ENCODE measurements at regions of chr12 and their contacts with region 1.

Region 1: DNA sequence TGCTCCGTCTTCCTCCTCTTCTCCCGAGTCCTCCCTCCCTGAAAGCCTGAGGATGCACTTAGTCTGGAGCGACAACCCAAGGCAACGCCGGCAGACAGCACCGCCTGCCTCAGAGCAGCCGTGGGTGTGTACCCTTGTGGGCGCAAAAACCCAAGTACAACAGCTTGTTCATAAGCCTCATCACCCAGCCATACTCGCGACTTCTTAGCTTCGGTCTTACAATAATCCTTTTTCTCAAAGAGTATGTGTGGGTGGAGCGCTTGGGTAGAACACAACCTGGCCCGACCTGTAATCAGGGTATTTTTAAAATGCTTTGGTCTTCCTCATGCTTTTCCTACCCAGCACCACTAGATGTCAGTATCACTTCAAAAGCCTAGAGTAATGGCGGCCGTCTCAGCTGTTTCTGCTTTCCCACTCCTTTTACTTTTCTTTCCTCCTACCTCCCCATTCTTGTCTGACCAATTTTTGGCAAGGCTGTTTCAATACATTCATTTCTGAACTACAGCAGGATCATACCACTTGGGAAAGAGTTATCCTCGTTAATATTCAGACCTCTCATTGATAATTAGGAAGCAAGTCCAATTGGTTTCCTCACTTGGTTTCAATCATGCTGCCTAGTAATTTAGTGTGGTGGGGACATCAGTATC is 198.9 kb downstream of the EPS8 start:
- DNase-seq: peak; percentile 72
- ATAC-seq: peak; percentile 97
- H3K4me3 Mint-ChIP-seq: peak overlapping the region; percentile 65
- H3K27ac Mint-ChIP-seq: peak overlapping the region; percentile 62
- H3K4me1 Mint-ChIP-seq: peaks cover 14% of the 10 kb centered on the region
- H3K27me3 Mint-ChIP-seq: peaks cover under 1% of the 10 kb centered on the region

Region 2: GRCh38 chr12:15789220-15790171 is 199.2 kb after region 1 on chr12 and contains the start of gene EPS8:
- CTCF ChIA-PET with region 1: interaction called, 15 read pairs
- POLR2A ChIA-PET with region 1: no interaction called
- DNase-seq: peak; percentile 89
- ATAC-seq: peak; percentile 98
- H3K4me3 Mint-ChIP-seq: peak within 1 kb of the TSS; percentile 85
- H3K27ac Mint-ChIP-seq: peak within 1 kb of the TSS; percentile 79
- H3K4me1 Mint-ChIP-seq: peaks cover 17% of the 10 kb centered on the region
- H3K27me3 Mint-ChIP-seq: peaks cover 55% of the 10 kb centered on the region
- total RNA-seq, gene EPS8: 1.0 to 2.2 TPM

Region 3: DNA sequence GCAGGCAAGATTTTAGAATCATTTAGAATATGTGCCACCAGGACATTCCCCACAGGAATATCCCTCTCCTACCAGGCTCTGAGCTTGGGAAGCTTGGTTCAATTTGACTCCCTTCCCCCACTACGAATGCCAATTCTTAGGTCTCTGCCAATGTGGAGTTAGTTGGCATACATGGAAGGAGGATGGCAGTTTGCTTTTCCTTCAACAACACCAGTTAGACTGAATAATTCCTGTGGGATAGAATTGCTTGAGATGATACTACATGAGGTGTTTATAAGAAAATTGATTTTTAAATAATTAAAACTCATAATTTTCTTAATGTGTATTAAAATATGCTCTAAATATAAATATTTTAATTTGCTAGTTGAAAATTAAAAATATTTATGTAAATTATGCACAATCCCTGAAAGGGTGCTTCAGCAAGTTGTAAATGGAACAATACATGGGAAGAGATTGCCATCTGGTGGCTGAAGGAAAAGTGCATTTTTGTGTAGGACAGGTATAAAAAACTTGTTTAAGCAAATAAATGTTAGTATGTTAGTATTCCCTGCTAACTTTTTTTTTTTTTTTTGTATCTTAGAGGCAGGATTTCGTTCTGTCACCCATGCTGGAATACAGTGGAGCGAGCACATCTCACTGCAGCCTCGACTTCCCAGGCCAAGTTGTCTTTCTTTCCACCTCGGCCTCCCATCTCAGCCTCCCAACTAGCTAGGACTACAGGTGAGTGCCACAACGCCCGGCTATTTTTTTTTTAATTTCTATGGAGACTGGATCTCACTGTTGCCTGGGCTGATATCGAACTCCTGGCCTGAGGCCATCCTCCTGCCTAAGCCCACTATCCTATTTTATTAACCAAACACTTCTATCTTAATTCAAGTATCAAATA is 266.0 kb after region 1 on chr12:
- CTCF ChIA-PET with region 1: interaction called, 32 read pairs
- POLR2A ChIA-PET with region 1: interaction called, 8 read pairs
- DNase-seq: peak; percentile 69
- ATAC-seq: peak; percentile 65
- H3K4me3 Mint-ChIP-seq: no peak overlapping the region
- H3K27ac Mint-ChIP-seq: no peak overlapping the region
- H3K4me1 Mint-ChIP-seq: no peaks in the 10 kb centered on the region
- H3K27me3 Mint-ChIP-seq: peaks cover 16% of the 10 kb centered on the region

Region 4: GRCh38 chr12:15899282-15899870 is 309.1 kb after region 1 on chr12:
- CTCF ChIA-PET with region 1: interaction called, 22 read pairs
- POLR2A ChIA-PET with region 1: interaction called, 3 read pairs
- DNase-seq: no peak
- ATAC-seq: peak; percentile 57
- H3K4me3 Mint-ChIP-seq: no peak overlapping the region
- H3K27ac Mint-ChIP-seq: no peak overlapping the region
- H3K4me1 Mint-ChIP-seq: peaks cover 12% of the 10 kb centered on the region
- H3K27me3 Mint-ChIP-seq: no peaks in the 10 kb centered on the region

Region 5: GRCh38 chr12:15910864-15911721 is 320.8 kb after region 1 on chr12 and contains the start of gene DERA:
- CTCF ChIA-PET with region 1: interaction called, 14 read pairs
- POLR2A ChIA-PET with region 1: no interaction called
- DNase-seq: peak; percentile 57
- ATAC-seq: peak; percentile 95
- H3K4me3 Mint-ChIP-seq: peak within 1 kb of the TSS; percentile 92
- H3K27ac Mint-ChIP-seq: peak within 1 kb of the TSS; percentile 91
- H3K4me1 Mint-ChIP-seq: peaks cover 23% of the 10 kb centered on the region
- H3K27me3 Mint-ChIP-seq: no peaks in the 10 kb centered on the region
- total RNA-seq, gene DERA: 23.1 to 27.7 TPM

Measured in activated CD8-positive, alpha-beta T cell treated with anti-CD3 and anti-CD28 coated beads, Interleukin-2, amount 10 ng/mL, durations not matched to agents 7 days and 5 days (primary cell).